HEK293 (cell line): ENCODE measurements at regions of chr19 and their contacts with region 1.

Region 1: DNA sequence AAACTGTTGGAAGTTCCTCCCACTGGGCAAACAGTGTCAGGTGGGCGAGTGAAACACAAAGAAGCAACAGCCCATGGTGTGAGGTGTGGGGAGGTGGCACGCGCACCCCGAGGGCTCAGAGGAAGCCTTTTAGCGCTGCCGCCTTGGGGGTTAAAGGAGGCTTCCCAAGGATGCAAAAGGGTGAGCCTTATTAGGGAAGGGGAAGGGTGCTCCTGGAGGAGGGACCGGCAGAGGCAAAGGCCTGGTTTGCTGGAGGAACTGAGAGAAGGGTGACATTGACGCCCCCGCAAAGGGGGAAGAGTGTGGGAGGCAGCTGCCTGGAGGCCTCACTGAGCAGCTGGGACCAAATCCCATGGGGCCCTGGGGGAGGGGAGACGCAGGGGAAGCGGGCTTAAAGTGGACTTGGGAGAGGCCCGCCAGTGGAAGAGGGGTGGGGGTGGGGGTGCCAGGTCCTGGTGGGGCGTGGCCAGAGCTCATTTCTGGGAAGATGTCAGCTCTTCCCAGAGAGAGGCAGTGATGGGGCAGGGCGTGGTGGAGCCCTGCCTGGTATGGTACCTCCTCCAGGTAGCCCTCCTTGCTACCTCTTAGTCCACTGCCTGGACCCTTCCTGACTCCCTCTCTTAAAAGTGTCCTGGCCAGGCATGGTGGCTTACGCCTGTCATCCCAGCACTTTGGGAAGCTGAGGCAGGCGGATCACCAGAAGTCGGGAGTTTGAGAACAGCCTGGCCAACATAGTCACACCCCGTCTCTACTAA is 12.0 kb upstream of the FCHO1 start:
- H3K4me3 ChIP-seq: no peak overlapping the region
- H3K27ac ChIP-seq: no peak overlapping the region
- H3K4me1 ChIP-seq: no peaks in the 10 kb centered on the region; the same call in 1 of the 2 replicates
- CTCF ChIP-seq: no peak

Region 2: DNA sequence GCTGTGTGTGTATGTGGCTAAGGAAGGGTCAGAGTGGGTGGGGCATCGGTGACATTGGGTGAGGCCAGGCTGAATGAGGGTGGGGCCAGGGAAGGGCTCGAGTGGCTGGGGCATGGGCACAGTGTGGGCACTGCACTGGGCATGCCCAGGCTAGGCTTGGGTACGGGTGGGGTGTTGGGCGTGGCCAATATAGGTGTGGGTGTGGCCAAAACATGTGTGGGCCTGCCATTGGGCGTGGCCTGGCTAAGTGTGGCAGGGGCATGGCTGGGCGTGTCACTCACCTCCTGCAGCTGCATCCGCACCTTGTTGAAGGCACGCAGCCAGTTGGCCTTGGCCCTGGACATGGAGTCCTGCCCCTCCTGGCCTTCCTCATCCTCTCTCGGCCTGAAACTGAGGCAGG is 84.3 kb before region 1 on chr19:
- CTCF ChIA-PET with region 1: no interaction called
- POLR2A ChIA-PET with region 1: no interaction called
- H3K4me3 ChIP-seq: no peak overlapping the region
- H3K27ac ChIP-seq: no peak overlapping the region
- H3K4me1 ChIP-seq: no peaks in the 10 kb centered on the region
- CTCF ChIP-seq: no peak

Region 3: DNA sequence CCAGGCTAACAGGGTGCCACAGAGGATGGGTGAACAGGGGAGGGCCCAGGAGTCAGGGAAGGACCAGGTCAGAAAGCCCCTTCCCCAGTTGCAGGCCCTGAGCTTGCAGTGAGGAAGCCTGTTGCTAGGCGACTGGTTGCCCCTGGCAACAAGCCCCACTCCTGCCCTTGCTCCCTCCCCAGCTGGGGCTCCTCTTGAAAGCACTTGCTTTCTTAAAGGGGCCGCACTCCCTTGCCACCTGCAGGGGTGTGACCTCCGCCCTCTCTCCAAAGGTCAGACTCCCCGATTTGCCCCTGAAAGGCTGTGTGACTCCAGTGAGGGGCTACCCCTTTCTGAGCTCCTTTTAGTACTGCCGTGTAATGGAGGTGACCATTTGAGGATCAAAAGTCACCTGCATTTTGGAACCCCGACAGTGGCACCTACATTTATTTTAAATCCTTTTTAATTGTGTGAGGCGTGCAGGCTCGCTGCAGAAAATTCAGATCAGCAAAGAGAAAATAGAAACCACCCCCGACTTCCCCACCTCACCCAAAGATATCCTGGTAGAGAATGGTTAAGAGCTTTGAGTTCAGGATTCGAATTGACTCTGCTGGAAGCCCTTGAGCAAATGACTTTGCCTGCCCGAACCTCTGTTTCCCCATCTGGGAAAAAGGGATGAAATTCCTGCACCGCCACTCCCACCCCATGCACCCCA is 16.8 kb after region 1 on chr19:
- CTCF ChIA-PET with region 1: no interaction called
- POLR2A ChIA-PET with region 1: interaction called, 13 read pairs
- H3K4me3 ChIP-seq: no peak overlapping the region
- H3K27ac ChIP-seq: no peak overlapping the region
- H3K4me1 ChIP-seq: no peaks in the 10 kb centered on the region
- CTCF ChIP-seq: no peak